A549 (cell line): ENCODE measurements at regions of chr14 and their contacts with region 1.

Region 1: GRCh38 chr14:91286530-91286937 is 42.0 kb upstream of the GPR68 start:
- DNase-seq: peak; percentile 73 to 88
- ATAC-seq: peak; percentile 91 to 96
- H3K4me3 ChIP-seq: no peak overlapping the region
- H3K27ac ChIP-seq: no peak overlapping the region
- H3K4me1 ChIP-seq: no peaks in the 10 kb centered on the region
- CTCF ChIP-seq: peak; percentile 90
- EP300 ChIP-seq: no peak
- POLR2A ChIP-seq: no peak
- RAD21 ChIP-seq: peak; percentile 75 to 79

Region 2: DNA sequence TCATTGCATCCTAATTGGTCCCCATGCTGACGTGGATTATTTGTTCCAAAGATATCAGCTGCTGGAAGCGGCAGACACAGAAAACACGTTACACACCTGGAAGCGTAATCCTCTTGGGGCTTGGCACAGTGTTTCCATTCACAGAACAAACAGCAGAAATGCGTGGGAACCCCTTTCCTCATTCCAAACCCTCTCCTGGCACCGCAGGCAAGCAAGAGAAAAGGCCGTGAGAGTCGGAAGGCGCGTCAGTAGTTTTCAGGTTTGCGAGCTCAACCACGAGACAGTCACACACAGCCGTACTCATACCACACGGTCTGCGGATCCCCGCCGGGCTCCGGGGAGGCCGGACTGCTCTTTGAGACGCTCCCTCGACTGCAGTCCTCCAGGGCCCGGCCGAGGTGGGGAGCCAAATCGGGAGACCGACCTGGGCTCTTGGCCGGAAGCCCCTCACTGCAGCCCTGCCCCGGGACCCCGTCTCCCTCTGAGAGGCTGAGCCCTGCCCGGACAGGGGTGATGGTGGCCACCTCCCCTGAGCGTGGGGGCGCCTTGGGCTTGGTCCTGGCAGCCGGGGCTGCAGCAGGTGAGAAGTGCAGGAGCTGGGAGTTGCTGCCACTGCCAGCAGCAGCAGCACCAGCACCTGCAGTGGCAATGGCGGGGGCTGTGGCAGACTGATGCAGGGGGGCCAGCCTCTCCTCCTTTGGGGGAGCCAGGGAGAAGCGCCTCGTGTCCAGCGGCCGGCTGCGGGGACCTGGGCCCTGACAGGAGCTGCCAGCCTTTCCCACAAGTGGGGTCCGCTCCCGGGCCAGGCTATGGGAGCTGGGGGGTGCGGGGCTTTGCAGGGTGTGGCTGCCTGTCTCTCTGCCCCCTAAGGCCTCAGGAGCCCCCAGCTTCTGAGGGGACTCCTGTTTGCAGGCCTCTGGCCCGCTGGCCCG is 13.9 kb before region 1 on chr14:
- CTCF ChIA-PET with region 1: interaction called, 24 read pairs
- POLR2A ChIA-PET with region 1: no interaction called
- DNase-seq: no peak
- ATAC-seq: no peak
- H3K4me3 ChIP-seq: no peak overlapping the region
- H3K27ac ChIP-seq: no peak overlapping the region
- H3K4me1 ChIP-seq: no peaks in the 10 kb centered on the region
- CTCF ChIP-seq: no peak
- EP300 ChIP-seq: no peak
- POLR2A ChIP-seq: no peak
- RAD21 ChIP-seq: no peak